ENCODE measurements at regions of chr2 and their contacts with region 1.

Region 1: DNA sequence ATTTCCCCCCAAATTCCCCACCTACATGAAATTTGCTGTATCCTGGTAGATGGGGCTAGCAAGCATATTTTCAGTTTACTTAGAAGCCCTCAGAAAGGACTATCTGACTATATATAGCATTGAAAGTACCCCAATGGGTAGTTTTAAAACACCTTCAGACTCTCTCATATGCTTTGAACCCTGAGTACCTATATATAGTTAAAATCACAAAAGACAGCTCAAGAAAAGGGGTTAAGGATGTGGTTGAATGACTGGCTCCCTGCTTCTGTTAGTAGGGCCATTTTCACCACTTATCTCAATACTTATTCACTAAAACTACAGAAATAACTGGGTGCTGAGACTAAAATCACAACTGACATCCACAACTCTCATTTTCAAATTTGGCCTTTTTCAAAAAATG is 18.5 kb downstream of the WDPCP start:
- DNase-seq: no peak
- H3K4me3 ChIP-seq: no peak overlapping the region
- H3K27ac ChIP-seq: no peak overlapping the region
- H3K4me1 ChIP-seq: no peaks in the 10 kb centered on the region
- H3K27me3 ChIP-seq: no peaks in the 10 kb centered on the region
- CTCF ChIP-seq: no peak
- POLR2A ChIP-seq: no peak

Region 2: GRCh38 chr2:63613391-63613901 is 43.7 kb after region 1 on chr2:
- intact Hi-C with region 1: loop called (anchors 2 kb)
- DNase-seq: no peak
- H3K4me3 ChIP-seq: no peak overlapping the region
- H3K27ac ChIP-seq: no peak overlapping the region
- H3K4me1 ChIP-seq: no peaks in the 10 kb centered on the region
- H3K27me3 ChIP-seq: no peaks in the 10 kb centered on the region
- CTCF ChIP-seq: no peak
- POLR2A ChIP-seq: no peak